Activated CD8-positive, alpha-beta T cell treated with anti-CD3 and anti-CD28 coated beads for 36 hours (primary cell): ENCODE measurements at regions of chr16 and their contacts with region 1.

Region 1: DNA sequence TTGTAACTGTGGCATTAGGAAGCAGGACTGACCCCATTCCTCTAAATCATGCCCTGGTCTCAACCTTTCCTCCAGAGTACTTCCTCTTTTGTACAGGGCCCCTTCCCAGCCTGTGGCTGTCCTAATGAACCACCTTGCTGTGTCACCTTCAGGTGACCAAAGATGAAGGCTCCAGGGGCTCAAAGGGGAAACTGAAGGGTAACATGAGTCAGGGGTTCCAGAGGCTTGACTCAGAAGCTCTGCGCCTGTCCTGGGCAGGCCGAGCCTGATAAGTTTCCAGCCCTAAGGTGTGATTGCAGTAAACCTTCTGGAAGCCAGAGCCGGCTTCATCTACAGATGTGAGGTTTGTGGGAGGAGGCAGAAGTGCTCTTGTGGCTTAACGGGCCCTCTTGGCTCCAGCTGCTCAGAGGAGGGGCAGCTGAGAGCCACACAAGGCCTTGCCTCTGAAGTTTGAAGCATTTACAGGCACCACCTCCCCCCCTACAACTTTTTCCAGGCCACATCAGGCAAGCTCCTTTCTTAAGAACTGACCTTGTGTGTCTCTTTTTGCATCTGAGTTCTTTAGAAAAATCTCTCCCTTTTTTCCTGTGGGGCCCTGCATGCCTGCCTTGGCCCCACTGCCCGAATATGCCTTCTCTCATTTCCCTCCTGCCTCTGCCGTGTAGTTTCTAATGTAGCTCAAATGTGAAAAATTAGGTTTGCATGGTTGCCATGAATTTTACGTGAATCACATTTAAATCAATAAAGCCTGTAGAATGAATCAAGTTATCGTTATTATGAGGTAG is 149.9 kb downstream of the CLEC16A start:
- DNase-seq: peak; percentile 88
- ATAC-seq: peak; percentile 74
- H3K4me3 Mint-ChIP-seq: peak overlapping the region; percentile 46
- H3K27ac Mint-ChIP-seq: peak overlapping the region; percentile 97
- H3K4me1 Mint-ChIP-seq: peaks cover 67% of the 10 kb centered on the region
- H3K27me3 Mint-ChIP-seq: no peaks in the 10 kb centered on the region
- CTCF ChIP-seq: no peak

Region 2: DNA sequence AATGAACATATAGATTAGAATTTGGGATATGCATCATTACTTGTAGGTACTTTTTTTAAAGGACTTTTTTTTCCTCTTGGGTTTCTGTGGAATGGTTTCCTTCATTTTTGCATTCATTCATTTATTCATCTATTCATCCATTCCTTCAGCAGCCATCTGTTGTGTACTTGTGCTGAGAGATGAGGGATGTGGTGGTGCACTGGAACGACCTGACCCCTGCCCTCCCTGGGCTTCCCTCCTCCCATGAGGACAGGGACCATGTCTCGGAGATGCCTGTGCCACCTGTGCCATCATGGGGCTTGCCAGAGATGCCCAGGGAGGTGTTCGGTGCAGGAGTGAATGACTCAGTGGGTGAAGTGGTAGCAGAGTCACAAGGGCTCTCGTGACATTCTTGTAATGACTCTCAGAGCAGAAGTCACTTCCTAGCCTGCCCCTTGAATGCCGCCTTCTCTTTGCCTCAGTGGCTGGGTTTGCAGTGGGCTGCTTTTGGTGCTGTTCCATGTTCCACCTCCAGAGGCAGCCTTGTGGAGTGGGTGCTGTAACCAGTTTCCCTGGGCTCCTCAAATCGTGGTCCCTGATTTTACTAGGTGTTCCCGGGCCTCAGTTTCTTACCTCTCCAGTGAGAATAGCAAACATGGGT is 106.0 kb before region 1 on chr16:
- CTCF ChIA-PET with region 1: interaction called, 3 read pairs
- POLR2A ChIA-PET with region 1: interaction called, 3 read pairs
- intact Hi-C with region 1: loop called (anchors 2 kb)
- DNase-seq: peak; percentile 90
- ATAC-seq: peak; percentile 93
- H3K4me3 Mint-ChIP-seq: peak overlapping the region; percentile 21
- H3K27ac Mint-ChIP-seq: peak overlapping the region; percentile 86
- H3K4me1 Mint-ChIP-seq: peaks cover 64% of the 10 kb centered on the region
- H3K27me3 Mint-ChIP-seq: no peaks in the 10 kb centered on the region
- CTCF ChIP-seq: peak; percentile 72

Region 3: DNA sequence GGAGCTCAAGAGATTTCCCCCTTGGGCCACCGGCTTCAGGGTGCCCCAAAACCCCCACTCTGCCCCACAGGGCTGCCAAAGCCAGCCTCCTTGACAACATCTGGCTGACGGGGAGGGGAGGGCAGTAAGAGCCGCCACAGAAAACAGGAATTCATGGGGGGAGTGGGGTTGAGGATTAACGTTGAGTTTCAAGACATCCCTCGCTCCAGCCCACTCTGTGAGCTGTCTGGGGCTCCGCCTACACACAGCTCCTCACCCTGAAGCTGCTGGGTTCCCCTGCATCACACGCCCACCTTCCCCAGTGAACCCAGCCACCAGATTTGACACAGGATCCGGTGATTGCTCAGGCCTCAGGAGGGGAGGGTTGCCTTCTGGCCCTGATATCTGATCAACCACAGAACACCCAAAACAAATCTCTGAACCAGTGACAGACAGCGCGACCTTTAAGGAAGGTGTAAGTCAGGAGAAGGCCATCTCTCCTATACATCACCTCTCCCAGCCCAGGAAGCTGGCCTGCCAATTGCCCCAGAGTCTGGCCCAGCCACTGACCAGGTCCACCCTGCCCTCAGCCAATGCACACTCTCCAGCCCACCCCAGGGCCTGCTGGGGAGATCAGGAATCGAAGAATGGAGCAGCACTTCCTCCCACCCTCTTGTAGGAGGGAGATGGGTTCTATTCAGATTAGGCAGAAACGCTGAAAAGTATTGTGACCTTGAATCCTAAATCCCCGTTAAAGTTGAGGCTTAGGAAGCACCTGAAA is 17.8 kb before region 1 on chr16:
- CTCF ChIA-PET with region 1: interaction called, 7 read pairs
- POLR2A ChIA-PET with region 1: interaction called, 18 read pairs
- intact Hi-C with region 1: loop called (anchors 1 kb)
- DNase-seq: peak; percentile 93
- ATAC-seq: peak; percentile 88
- H3K4me3 Mint-ChIP-seq: no peak overlapping the region
- H3K27ac Mint-ChIP-seq: peak overlapping the region; percentile 91
- H3K4me1 Mint-ChIP-seq: peaks cover 90% of the 10 kb centered on the region
- H3K27me3 Mint-ChIP-seq: no peaks in the 10 kb centered on the region
- CTCF ChIP-seq: no peak

Region 4: GRCh38 chr16:11114366-11115164 is 20.3 kb after region 1 on chr16:
- CTCF ChIA-PET with region 1: interaction called, 5 read pairs
- POLR2A ChIA-PET with region 1: interaction called, 15 read pairs
- intact Hi-C with region 1: no loop called
- DNase-seq: peak; percentile 68
- ATAC-seq: peak; percentile 86
- H3K4me3 Mint-ChIP-seq: peak overlapping the region; percentile 55
- H3K27ac Mint-ChIP-seq: peak overlapping the region; percentile 93
- H3K4me1 Mint-ChIP-seq: peaks cover 61% of the 10 kb centered on the region
- H3K27me3 Mint-ChIP-seq: no peaks in the 10 kb centered on the region
- CTCF ChIP-seq: no peak

Region 5: DNA sequence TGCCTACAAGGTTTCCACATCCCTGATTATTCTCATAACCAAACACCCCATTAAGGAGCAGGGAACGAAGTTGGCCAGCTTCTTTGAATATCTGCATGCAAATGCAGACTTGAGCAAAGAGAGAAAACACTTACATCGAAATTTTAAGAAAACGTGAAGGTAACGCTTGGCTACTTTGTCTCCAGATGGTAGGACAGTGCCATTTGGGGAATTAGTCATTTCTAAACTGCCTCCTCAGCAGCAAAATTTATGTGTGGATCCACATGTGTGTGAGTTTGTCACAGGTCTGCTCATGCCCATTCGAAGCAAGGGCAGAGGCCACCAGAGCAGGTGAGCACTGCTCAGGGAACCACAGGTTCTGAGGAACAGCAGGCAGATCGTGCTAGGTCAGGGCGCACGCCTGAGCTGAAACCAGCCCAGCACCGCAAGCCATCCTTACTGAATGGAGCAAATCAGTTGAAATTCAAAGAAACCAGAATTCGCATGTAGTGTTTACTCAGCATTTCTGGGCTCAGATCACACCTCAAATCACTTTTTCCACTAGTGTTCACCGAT is 81.6 kb after region 1 on chr16:
- CTCF ChIA-PET with region 1: no interaction called
- POLR2A ChIA-PET with region 1: interaction called, 4 read pairs
- intact Hi-C with region 1: loop called (anchors 10 kb)
- DNase-seq: peak; percentile 79
- ATAC-seq: peak; percentile 85
- H3K4me3 Mint-ChIP-seq: no peak overlapping the region
- H3K27ac Mint-ChIP-seq: peak overlapping the region; percentile 89
- H3K4me1 Mint-ChIP-seq: peaks cover 65% of the 10 kb centered on the region
- H3K27me3 Mint-ChIP-seq: no peaks in the 10 kb centered on the region
- CTCF ChIP-seq: no peak

Region 6: GRCh38 chr16:11232852-11233726 is 138.8 kb after region 1 on chr16:
- CTCF ChIA-PET with region 1: interaction called, 3 read pairs
- POLR2A ChIA-PET with region 1: interaction called, 6 read pairs
- intact Hi-C with region 1: loop called (anchors 2 kb)
- DNase-seq: peak; percentile 97
- ATAC-seq: peak; percentile 81
- H3K4me3 Mint-ChIP-seq: peak overlapping the region; percentile 63
- H3K27ac Mint-ChIP-seq: peak overlapping the region; percentile 98
- H3K4me1 Mint-ChIP-seq: peaks cover 75% of the 10 kb centered on the region
- H3K27me3 Mint-ChIP-seq: no peaks in the 10 kb centered on the region
- CTCF ChIP-seq: no peak